ENCODE measurements at regions of chr22 and their contacts with region 1.

Region 1: GRCh38 chr22:22748297-22748743 is 103.9 kb downstream of the GGTLC2 start:
- DNase-seq: peak; percentile 71
- H3K4me3 Mint-ChIP-seq: no peak overlapping the region
- H3K27ac Mint-ChIP-seq: no peak overlapping the region
- H3K4me1 Mint-ChIP-seq: peaks cover 16% of the 10 kb centered on the region
- H3K27me3 Mint-ChIP-seq: peaks cover 11% of the 10 kb centered on the region
- CTCF ChIP-seq: peak; percentile 88

Region 2: DNA sequence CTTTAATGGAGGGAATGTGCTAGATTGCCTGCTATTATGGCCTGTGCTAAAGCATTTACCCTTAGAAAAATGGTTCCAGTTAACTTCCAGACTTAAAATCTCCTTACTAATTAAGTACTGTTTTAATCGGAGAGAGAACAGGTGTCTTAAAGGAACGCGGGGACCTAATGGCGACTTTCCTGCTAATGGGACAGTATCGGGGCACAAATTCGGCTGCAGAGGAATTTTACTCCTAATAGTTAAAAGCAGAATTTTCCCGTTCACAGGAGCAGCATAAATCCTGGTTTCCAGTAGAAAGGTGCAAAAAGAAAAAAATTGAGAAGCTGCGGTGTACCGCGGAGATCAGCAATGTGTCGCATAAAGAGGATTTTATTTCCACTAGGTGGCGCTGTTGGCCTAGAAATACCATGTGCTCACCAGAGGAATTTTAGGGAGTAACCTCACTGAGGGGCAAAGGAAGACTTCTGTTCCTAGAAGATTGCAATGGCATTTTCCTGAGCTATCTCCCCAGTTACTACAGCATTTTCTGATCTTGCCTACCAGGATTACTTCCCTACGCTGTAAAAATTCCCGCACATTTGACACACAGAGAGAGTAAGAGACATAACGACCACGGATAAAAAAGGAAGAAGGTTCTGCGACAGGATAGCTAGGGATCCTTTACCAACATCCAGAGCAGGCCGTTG is 284.3 kb before region 1 on chr22:
- CTCF ChIA-PET with region 1: interaction called, 3 read pairs
- POLR2A ChIA-PET with region 1: no interaction called
- intact Hi-C with region 1: loop called (anchors 2 kb)
- DNase-seq: peak; percentile 71
- H3K4me3 Mint-ChIP-seq: no peak overlapping the region
- H3K27ac Mint-ChIP-seq: no peak overlapping the region
- H3K4me1 Mint-ChIP-seq: peaks cover 3% of the 10 kb centered on the region
- H3K27me3 Mint-ChIP-seq: peaks cover 36% of the 10 kb centered on the region
- CTCF ChIP-seq: peak; percentile 69

Region 3: GRCh38 chr22:22498267-22498666 is 250.1 kb before region 1 on chr22:
- CTCF ChIA-PET with region 1: no interaction called
- POLR2A ChIA-PET with region 1: no interaction called
- intact Hi-C with region 1: no loop called
- DNase-seq: no peak
- H3K4me3 Mint-ChIP-seq: no peak overlapping the region
- H3K27ac Mint-ChIP-seq: no peak overlapping the region
- H3K4me1 Mint-ChIP-seq: no peaks in the 10 kb centered on the region
- H3K27me3 Mint-ChIP-seq: peaks cover 61% of the 10 kb centered on the region
- CTCF ChIP-seq: no peak

Region 4: DNA sequence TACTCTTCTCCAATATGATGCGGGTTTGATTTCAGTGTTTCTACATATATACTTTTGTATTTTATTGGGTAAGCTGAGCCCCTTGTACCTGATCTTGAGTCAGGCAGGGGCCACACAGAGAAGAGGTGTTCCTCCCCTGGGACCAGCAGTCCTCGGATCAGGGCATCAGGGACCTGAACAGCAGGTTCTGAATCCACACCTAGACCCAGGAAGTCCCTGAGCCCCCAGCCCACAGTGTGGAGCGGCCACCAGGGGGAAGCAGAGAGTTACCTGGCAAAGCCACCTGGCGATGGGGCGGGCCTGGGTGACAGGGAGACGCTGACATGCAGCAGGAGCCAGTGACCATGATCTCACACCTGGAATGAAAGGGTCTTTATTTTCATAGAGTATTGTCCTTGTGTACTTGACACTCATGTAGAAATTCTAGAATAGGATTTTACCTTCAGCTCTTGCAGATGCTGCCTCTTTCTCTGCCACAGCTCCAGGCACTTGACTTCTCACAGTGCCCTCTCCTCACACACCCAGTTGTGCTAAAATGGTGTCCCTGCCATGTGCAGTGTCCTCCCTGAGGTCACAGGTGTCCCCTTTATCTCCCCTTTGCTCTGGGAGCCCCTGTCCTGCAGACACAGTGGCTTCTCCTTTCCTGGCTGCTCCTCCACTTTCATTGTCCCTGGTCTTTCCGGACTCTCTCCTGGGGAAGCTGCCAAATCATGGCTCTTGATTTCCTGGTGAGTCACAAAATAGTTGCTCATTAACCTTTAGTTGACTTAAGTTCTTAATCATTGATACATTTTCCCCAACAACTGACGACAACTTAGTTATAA is 55.4 kb before region 1 on chr22:
- CTCF ChIA-PET with region 1: interaction called, 13 read pairs
- POLR2A ChIA-PET with region 1: no interaction called
- intact Hi-C with region 1: loop called (anchors 1 kb)
- DNase-seq: peak; percentile 86
- H3K4me3 Mint-ChIP-seq: no peak overlapping the region
- H3K27ac Mint-ChIP-seq: peak overlapping the region; percentile 3
- H3K4me1 Mint-ChIP-seq: peaks cover 15% of the 10 kb centered on the region
- H3K27me3 Mint-ChIP-seq: no peaks in the 10 kb centered on the region
- CTCF ChIP-seq: peak; percentile 75

Region 5: DNA sequence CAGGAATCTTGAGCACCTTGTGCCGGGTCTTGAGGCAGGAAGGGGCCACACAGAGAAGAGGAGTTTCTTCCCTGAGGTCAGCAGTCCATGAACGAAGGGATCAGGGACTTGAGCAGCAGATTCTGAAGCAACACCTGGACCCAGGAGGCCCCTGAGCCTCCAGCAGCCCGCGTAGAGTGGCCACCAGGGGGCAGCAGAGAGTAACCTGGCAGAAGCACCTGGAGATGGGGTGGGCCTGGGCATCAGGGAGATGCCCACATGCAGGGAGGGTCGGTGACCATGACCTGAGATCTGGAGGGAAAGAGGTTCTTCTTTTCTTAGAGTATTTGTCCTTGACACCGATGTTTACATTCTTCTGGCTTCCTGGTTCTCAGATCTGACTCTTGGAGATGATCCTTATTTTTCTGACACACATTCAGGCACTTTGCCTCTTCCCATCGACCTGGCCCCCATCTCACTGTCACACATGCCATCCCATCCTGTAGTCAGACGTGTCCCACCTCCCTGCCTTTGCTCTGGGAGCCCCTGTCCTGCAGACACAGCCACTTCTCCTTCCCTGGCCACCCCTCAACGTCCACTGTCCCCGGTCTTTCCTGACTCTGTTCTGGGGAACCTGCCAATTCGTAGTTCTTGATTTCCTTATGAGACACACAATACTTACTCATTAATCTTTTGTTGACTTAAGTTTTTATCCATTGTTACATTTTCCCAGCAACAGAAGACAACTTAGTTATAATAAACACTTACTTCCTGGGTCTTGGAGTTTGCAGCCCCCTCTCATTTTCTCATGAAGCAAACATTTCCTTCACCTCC is 37.4 kb before region 1 on chr22:
- CTCF ChIA-PET with region 1: interaction called, 43 read pairs
- POLR2A ChIA-PET with region 1: no interaction called
- intact Hi-C with region 1: loop called (anchors 1 kb)
- DNase-seq: peak; percentile 60
- H3K4me3 Mint-ChIP-seq: no peak overlapping the region
- H3K27ac Mint-ChIP-seq: no peak overlapping the region
- H3K4me1 Mint-ChIP-seq: no peaks in the 10 kb centered on the region
- H3K27me3 Mint-ChIP-seq: no peaks in the 10 kb centered on the region
- CTCF ChIP-seq: peak; percentile 95

Region 6: GRCh38 chr22:22770280-22770871 is 22.1 kb after region 1 on chr22:
- CTCF ChIA-PET with region 1: interaction called, 13 read pairs
- POLR2A ChIA-PET with region 1: interaction called, 3 read pairs
- intact Hi-C with region 1: no loop called
- DNase-seq: peak; percentile 69
- H3K4me3 Mint-ChIP-seq: no peak overlapping the region
- H3K27ac Mint-ChIP-seq: no peak overlapping the region
- H3K4me1 Mint-ChIP-seq: no peaks in the 10 kb centered on the region
- H3K27me3 Mint-ChIP-seq: peaks cover 96% of the 10 kb centered on the region
- CTCF ChIP-seq: peak; percentile 86

Measured in MCF 10A (cell line).